ENCODE measurements at regions of chr10 and their contacts with region 1.

Region 1: DNA sequence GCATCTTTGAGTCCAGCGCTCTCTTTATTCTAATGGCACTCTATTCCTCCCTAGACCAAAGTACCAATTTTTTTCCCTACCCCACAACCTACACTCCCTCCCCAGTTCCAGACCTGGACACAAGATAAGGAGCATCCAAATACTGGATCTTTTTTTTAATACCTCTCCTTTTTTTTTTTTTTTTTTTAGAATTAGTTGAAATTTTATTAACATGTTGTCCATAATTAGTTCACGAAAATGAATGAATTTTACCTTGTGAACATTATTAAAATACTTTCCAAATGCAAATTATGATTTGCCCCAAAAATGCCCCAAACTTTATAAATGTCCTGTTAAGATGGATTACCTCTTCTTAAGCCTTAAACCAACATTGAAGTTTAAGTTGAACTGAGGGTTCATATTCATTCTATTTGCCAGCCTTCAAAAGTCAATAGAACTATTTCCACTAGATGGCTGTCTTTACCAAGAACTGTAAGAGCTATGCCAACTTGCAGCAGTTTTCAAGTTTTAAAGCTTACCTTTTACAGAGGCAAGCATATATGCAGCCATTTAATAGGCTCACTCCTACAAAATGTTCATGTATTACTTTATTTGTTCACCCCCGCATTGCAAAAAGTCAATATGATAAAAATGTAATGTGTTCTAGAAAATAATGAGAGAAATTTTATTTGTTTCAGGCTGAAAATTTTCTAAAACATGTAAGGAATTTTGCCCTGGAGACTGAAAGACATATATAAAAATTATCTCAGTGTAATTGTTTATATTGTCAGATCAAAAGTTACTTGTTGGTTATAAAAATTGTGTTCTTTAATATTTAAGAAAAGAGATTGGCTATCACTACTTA is 39.7 kb upstream of the TNKS2 start:
- DNase-seq: peak in 3 of 14 experiments; percentile 70 to 77 (median 73)
- ATAC-seq: peak; percentile 76
- H3K4me3 ChIP-seq: no peak overlapping the region
- H3K4me3 Mint-ChIP-seq: no peak overlapping the region
- H3K27ac ChIP-seq: no peak overlapping the region
- H3K27ac Mint-ChIP-seq: no peak overlapping the region
- H3K4me1 ChIP-seq: no peaks in the 10 kb centered on the region
- H3K4me1 Mint-ChIP-seq: no peaks in the 10 kb centered on the region
- H3K27me3 ChIP-seq: peaks cover 0 to 10% of the 10 kb centered on the region in 2 experiments
- H3K27me3 Mint-ChIP-seq: peaks cover 23% of the 10 kb centered on the region
- CTCF ChIP-seq: peak; percentile 77

Region 2: DNA sequence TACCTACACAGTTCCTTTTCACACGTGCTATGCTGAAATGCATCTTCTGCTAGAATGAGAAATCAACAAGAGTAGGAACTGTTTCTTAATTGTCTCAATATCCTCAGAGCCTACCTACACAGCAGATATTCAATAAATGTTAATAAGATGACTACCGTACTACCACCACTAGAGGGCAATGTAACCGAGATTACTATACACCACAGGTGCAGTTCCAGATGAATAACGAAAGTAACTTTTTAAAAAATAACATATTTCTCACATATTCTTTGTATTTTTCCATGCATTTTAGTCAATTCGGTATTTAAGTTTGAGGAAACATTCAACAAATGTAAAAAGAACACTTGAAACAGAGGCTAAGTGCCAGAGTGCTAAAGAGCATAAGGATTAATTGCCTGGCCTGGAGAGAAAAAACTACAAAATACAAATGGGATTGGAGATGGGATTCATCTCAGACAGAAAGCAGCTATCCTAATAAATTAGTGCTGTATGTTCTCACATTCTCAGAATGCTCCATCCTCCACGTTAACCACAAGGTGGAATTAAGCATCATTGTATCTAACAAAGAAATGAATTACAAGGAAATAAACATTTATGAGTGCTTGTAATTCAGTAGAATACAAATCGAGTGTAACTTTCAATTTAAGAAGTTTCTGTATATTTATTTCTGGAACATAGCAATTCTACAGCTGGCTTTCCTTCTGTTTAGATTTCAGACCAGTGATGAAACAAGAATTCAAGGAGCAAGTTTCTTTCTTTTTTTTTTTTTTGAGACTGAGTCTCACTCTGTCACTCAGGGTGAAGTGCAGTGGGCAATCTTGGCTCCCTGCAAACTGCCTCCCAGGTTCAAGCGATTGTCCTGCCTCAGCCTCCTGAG is 368.7 kb before region 1 on chr10:
- CTCF ChIA-PET with region 1: no interaction called
- POLR2A ChIA-PET with region 1: no interaction called
- intact Hi-C with region 1: loop called in 1 of 2 experiments (anchors 10 kb)
- DNase-seq: peak in 4 of 14 experiments; percentile 31 to 85 (median 80)
- ATAC-seq: peak; percentile 99
- H3K4me3 ChIP-seq: no peak overlapping the region
- H3K4me3 Mint-ChIP-seq: no peak overlapping the region
- H3K27ac ChIP-seq: no peak overlapping the region
- H3K27ac Mint-ChIP-seq: no peak overlapping the region
- H3K4me1 ChIP-seq: no peaks in the 10 kb centered on the region
- H3K4me1 Mint-ChIP-seq: peaks cover 9% of the 10 kb centered on the region
- H3K27me3 ChIP-seq: peaks cover 0 to 10% of the 10 kb centered on the region in 2 experiments
- H3K27me3 Mint-ChIP-seq: peaks cover 28% of the 10 kb centered on the region
- CTCF ChIP-seq: peak; percentile 78

Region 3: GRCh38 chr10:91613411-91614253 is 144.9 kb before region 1 on chr10:
- CTCF ChIA-PET with region 1: no interaction called
- POLR2A ChIA-PET with region 1: no interaction called
- intact Hi-C with region 1: no loop called
- DNase-seq: no peak
- ATAC-seq: no peak
- H3K4me3 ChIP-seq: no peak overlapping the region
- H3K4me3 Mint-ChIP-seq: no peak overlapping the region
- H3K27ac ChIP-seq: no peak overlapping the region
- H3K27ac Mint-ChIP-seq: no peak overlapping the region
- H3K4me1 ChIP-seq: no peaks in the 10 kb centered on the region
- H3K4me1 Mint-ChIP-seq: no peaks in the 10 kb centered on the region
- H3K27me3 ChIP-seq: peaks cover 0 to 7% of the 10 kb centered on the region in 2 experiments
- H3K27me3 Mint-ChIP-seq: peaks cover 33% of the 10 kb centered on the region
- CTCF ChIP-seq: no peak

Region 4: DNA sequence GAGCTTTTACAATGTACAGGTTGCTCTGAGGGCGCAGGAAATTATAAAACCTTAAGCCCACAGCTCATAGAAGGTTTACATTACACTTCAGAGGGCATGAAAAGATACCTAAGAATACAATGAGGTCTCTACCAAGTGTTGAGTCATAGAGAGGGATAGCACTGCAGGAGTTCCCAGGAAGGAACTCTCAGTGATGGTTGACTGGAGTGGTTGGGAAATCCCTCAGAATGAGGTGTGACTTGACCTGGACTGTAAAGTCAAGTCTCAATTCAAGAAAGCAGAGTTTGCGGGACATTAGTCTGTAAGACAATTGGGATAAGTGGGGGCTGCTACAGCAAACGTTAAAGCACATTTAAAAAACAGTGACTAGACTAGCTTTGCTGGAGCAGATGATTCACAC is 61.6 kb after region 1 on chr10:
- CTCF ChIA-PET with region 1: interaction called, 4 read pairs
- POLR2A ChIA-PET with region 1: no interaction called
- intact Hi-C with region 1: loop called in 1 of 2 experiments (anchors 5 kb)
- DNase-seq: no peak
- ATAC-seq: no peak
- H3K4me3 ChIP-seq: no peak overlapping the region
- H3K4me3 Mint-ChIP-seq: no peak overlapping the region
- H3K27ac ChIP-seq: no peak overlapping the region
- H3K27ac Mint-ChIP-seq: no peak overlapping the region
- H3K4me1 ChIP-seq: no peaks in the 10 kb centered on the region
- H3K4me1 Mint-ChIP-seq: peaks cover 9% of the 10 kb centered on the region
- H3K27me3 ChIP-seq: no peaks in the 10 kb centered on the region
- H3K27me3 Mint-ChIP-seq: no peaks in the 10 kb centered on the region
- CTCF ChIP-seq: no peak

Region 5: DNA sequence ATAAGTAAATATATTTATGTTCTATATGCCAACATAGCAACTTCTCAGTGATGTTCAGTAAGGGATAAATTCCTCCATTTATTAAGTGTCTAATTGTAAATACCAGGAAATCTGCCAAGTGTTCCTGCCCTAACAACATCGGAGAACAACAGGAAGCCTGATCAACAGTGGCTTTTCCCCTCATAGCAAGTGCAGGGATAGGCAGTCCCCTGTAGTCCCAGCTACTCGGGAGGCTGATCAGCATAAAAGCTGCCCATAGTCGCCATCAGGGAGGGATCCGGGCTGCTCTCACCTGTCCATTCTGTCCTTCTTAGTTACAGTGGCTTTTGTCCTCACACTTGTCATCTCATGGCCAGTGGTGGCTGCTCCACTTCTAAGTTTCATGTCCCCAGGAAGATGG is 674.1 kb after region 1 on chr10:
- CTCF ChIA-PET with region 1: no interaction called
- POLR2A ChIA-PET with region 1: no interaction called
- intact Hi-C with region 1: loop called (anchors 5 kb)
- DNase-seq: no peak
- ATAC-seq: no peak
- H3K4me3 ChIP-seq: no peak overlapping the region
- H3K4me3 Mint-ChIP-seq: no peak overlapping the region
- H3K27ac ChIP-seq: no peak overlapping the region
- H3K27ac Mint-ChIP-seq: no peak overlapping the region
- H3K4me1 ChIP-seq: no peaks in the 10 kb centered on the region
- H3K4me1 Mint-ChIP-seq: no peaks in the 10 kb centered on the region
- H3K27me3 ChIP-seq: no peaks in the 10 kb centered on the region
- H3K27me3 Mint-ChIP-seq: no peaks in the 10 kb centered on the region
- CTCF ChIP-seq: no peak